ENCODE measurements at regions of chr9 and their contacts with region 1.

Region 1: DNA sequence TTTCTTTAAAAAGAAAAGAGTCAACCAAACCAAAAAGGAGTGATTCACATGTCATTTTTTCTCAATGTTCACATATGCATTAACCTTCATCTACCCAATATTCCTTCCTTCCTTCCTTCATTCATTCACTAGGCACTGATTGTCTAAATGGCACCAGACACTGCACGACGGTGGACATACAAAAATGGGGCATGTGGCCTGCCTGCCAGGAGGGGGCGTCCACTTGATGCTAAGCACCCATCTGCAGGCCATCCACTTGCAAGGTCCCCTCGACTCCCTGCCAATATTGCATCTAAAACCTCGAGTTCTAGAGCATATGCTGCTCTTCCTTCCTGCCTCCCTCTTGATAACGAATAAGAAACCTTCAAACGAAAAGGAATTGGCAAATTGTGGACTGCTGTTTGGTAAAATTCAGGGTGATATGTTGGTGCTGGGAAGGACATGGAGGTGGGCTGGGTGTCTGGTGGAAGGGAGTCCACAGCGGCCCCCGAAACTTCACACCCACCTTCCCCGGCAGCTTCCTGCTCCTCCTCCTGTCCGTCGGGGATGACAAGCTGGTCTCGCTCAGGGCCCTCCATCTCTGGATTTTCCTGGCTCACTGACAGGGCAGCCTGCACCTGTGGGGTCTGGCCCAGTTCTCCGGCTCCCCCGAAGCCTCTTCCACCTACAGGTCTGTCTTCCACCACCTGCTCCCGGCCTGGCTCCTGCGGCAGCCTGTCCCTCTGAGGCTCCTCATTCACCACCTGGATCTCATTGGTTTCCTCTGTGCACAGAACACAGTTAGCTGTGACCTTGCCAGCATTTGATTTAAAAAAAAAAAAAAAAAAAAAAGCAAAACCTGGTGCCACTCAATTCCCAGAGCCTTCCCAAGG is 64.3 kb downstream of the GOLM1 start:
- DNase-seq: no peak
- ATAC-seq: peak; percentile 74
- H3K4me3 ChIP-seq: no peak overlapping the region
- H3K27ac ChIP-seq: no peak overlapping the region
- H3K4me1 ChIP-seq: no peaks in the 10 kb centered on the region
- H3K27me3 ChIP-seq: no peaks in the 10 kb centered on the region
- CTCF ChIP-seq: peak; percentile 37 to 48 (median 47); a peak in 5 of 6 replicates
- EP300 ChIP-seq: no peak
- POLR2A ChIP-seq: no peak
- RAD21 ChIP-seq: peak; percentile 40; the same call in 1 of the 2 replicates

Region 2: DNA sequence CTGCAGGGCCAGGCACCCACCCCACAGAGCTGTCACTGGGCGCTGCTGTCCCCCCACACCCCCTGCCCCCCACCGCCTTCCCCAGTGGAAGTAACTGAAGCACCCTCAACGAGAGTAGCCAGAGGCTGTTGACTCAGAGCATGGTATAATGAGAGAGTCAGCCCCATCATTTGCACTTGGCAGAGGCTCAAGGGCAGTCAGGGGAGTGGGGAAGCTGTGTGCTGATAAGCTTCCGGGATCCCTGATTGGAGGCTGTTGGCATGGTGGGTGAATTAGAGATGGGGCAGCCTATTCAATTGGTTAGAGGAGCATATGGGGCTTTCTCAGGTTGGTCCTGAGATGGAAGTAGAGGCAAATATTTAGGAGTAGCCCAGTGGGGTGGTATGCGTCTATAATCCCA is 141.4 kb after region 1 on chr9:
- CTCF ChIA-PET with region 1: no interaction called
- POLR2A ChIA-PET with region 1: no interaction called
- RAD21 ChIA-PET with region 1: no interaction called
- SMC1A ChIA-PET with region 1: no interaction called
- in situ Hi-C with region 1: no loop called
- intact Hi-C with region 1: no loop called
- DNase-seq: no peak
- ATAC-seq: no peak
- H3K4me3 ChIP-seq: no peak overlapping the region
- H3K27ac ChIP-seq: no peak overlapping the region
- H3K4me1 ChIP-seq: no peaks in the 10 kb centered on the region
- H3K27me3 ChIP-seq: no peaks in the 10 kb centered on the region
- CTCF ChIP-seq: no peak
- EP300 ChIP-seq: no peak
- POLR2A ChIP-seq: no peak
- RAD21 ChIP-seq: no peak

Region 3: DNA sequence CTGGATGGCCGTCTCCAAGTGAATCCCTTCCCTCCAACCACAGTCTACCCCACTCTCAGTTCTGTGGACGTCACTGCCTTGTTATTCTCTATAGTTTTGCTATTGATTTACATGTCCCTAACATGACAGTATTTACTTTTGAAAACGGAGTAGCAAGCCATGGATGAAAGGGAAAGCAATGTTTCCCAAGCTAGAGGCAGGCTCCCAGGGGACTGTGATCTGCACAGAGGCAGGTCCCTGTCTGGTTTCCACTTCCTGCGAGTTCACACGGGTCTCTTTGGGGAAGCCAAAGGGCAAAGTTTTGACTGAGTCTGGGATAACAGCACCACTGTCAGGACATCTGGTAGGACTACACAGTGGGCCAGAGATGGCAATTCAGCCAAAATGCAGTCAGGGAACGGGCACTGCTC is 211.7 kb after region 1 on chr9:
- CTCF ChIA-PET with region 1: no interaction called
- POLR2A ChIA-PET with region 1: no interaction called
- RAD21 ChIA-PET with region 1: interaction called, 4 read pairs
- SMC1A ChIA-PET with region 1: no interaction called
- in situ Hi-C with region 1: no loop called
- intact Hi-C with region 1: loop called (anchors 10 kb)
- DNase-seq: peak; percentile 80
- ATAC-seq: peak; percentile 98
- H3K4me3 ChIP-seq: peak overlapping the region; percentile 15; the same call in 1 of the 2 replicates
- H3K27ac ChIP-seq: no peak overlapping the region
- H3K4me1 ChIP-seq: no peaks in the 10 kb centered on the region
- H3K27me3 ChIP-seq: no peaks in the 10 kb centered on the region
- CTCF ChIP-seq: peak; percentile 31 to 74 (median 43); a peak in 3 of 6 replicates
- EP300 ChIP-seq: 0 out of 4 replicates have a peak, but pooled peaks of 1 of the 2 experiments have one; percentile 21
- POLR2A ChIP-seq: no peak
- RAD21 ChIP-seq: peak; percentile 66

Measured in GM12878 (cell line).